GM18951 (cell line): ENCODE measurements at regions of chr11 and their contacts with region 1.

Region 1: GRCh38 chr11:59088162-59088561 is 2.1 kb downstream of the GLYATL1B start:
- POLR2A ChIP-seq: no peak

Region 2: DNA sequence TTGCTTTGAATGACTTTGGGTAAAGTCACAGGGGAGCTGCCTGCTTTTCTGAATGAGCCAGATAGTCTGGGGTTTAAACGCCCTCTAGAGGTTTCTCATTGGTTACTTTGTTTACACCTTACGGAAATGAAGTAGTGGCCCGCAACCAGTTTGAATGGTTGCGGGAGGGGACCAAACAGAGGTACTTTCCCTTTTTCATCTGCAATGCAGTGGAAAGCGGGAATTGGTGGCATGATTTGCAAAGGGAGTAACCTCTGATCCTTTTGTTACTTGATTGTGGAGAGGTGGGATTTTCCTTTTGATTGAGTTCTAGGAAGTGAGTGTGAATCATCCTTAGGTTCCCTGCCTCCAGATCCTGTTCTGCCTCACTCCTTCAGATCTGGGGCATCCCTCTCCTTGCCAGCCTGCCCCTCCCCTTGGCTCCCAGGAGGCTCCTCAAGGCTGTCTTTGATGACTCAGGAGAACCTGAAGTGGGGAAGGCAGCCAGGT is 164.8 kb before region 1 on chr11:
- in situ Hi-C with region 1: no loop called
- POLR2A ChIP-seq: no peak

Region 3: GRCh38 chr11:59040607-59041006 is 47.6 kb before region 1 on chr11:
- in situ Hi-C with region 1: loop called (anchors 5 kb)
- POLR2A ChIP-seq: no peak